Right cardiac atrium (tissue), 5 donors: ENCODE measurements at regions of chr1 and their contacts with region 1.

Region 1: GRCh38 chr1:25556791-25557476 is 13.5 kb downstream of the LDLRAP1 start:
- DNase-seq: peak in 1 of 3 donors; percentile 33
- ATAC-seq: peak; percentile 30 to 32
- H3K4me3 ChIP-seq: no peak overlapping the region
- H3K27ac ChIP-seq: no peak overlapping the region
- H3K4me1 ChIP-seq: peaks cover 4% of the 10 kb centered on the region
- H3K27me3 ChIP-seq: no peaks in the 10 kb centered on the region

Region 2: GRCh38 chr1:25590096-25590824 is 33.3 kb after region 1 on chr1:
- intact Hi-C with region 1: loop called in 1 of 4 experiments (anchors 2 kb)
- DNase-seq: peak; percentile 63 to 87 (median 75)
- ATAC-seq: peak; percentile 78 to 84
- H3K4me3 ChIP-seq: no peak overlapping the region
- H3K27ac ChIP-seq: no peak overlapping the region
- H3K4me1 ChIP-seq: no peaks in the 10 kb centered on the region
- H3K27me3 ChIP-seq: no peaks in the 10 kb centered on the region